ENCODE measurements at regions of chr12 and their contacts with region 1.

Region 1: DNA sequence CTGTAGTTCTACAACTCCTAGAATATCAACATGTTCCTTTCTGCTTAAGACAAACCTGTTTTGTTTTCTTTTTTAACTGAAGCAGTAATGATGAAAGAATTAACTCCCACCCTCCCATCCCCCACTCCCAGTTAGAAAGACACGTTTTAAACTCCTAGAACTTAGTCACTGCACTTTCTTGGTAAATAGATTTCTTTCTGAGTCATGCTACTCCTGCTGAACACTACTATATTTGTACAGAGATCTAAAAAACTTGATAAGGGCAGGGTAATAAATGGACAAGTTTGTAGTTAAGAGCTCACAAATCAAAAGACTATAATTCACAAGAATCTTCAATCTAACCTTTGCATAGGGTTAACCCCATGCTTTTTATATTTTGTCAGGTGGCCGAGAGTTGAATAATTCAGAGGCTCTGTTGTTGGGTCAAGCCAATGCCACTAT is 118.9 kb upstream of the PTPRB start:
- DNase-seq: no peak
- H3K4me3 Mint-ChIP-seq: peak overlapping the region; percentile 49
- H3K27ac Mint-ChIP-seq: peak overlapping the region; percentile 88
- H3K4me1 Mint-ChIP-seq: peaks cover 33% of the 10 kb centered on the region
- H3K27me3 Mint-ChIP-seq: no peaks in the 10 kb centered on the region
- CTCF ChIP-seq: no peak

Region 2: DNA sequence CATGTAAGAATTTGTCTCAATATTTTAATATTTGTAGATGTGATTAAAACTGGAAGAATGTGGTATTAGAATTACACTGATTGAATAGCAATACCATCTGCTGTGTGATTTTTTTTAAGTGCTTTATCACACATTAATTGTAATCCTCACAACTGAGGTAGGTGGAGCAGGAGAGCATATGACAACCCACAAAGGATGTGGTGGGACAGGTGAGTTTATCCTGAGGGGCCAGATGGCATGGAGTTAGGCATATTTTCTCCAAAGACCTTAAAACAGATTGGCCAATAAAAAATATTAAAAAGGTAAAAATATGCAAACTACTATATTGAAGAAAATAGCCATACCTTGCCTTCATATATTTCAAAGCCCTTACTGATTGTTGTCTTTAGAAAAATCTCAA is 1153.2 kb before region 1 on chr12:
- CTCF ChIA-PET with region 1: no interaction called
- intact Hi-C with region 1: no loop called
- DNase-seq: no peak
- H3K4me3 Mint-ChIP-seq: no peak overlapping the region
- H3K27ac Mint-ChIP-seq: peak overlapping the region; percentile 34
- H3K4me1 Mint-ChIP-seq: no peaks in the 10 kb centered on the region
- H3K27me3 Mint-ChIP-seq: no peaks in the 10 kb centered on the region
- CTCF ChIP-seq: no peak

Region 3: DNA sequence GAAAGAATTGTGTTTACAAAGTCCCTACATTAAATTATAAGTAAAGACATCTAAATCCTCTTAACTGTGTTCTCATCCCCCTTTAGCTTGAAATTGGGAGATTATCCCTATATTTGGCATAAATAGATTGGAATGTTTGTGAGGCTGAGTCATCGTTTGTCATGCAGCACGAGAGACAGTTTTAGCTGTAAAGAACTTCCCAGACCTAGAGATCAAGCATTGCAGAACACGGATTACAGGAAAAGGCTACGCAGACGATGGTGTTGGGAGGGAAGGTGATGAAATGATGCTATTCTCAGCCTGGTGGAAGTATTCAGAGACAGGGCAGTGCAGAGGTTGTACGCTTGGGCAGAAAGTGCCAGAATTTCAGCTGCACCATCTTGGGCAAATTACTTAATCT is 212.7 kb before region 1 on chr12:
- CTCF ChIA-PET with region 1: no interaction called
- intact Hi-C with region 1: no loop called
- DNase-seq: no peak
- H3K4me3 Mint-ChIP-seq: no peak overlapping the region
- H3K27ac Mint-ChIP-seq: peak overlapping the region; percentile 50
- H3K4me1 Mint-ChIP-seq: peaks cover 13% of the 10 kb centered on the region
- H3K27me3 Mint-ChIP-seq: no peaks in the 10 kb centered on the region
- CTCF ChIP-seq: no peak

Region 4: DNA sequence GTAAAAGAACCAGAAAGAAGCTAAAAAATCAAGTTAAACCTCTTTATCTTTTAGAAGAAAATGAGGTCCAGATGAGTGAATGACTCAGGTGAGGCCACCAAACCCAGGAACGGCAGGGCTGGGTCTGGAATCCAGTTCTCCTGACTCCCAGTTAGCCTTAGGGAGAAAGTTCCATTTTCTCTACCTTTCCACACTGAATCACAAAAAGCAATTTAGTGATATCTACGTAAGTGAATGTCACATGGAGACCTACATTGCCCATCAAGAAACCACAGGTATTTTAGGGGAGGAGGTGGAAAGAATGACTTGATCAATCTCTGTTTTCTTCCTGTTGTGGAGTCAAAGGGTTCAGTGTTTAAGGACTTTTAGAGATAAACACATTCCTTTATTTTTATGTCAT is 12.0 kb before region 1 on chr12:
- CTCF ChIA-PET with region 1: interaction called, 14 read pairs
- intact Hi-C with region 1: loop called (anchors 1 kb)
- DNase-seq: peak; percentile 58
- H3K4me3 Mint-ChIP-seq: peak overlapping the region; percentile 8
- H3K27ac Mint-ChIP-seq: peak overlapping the region; percentile 83
- H3K4me1 Mint-ChIP-seq: peaks cover 69% of the 10 kb centered on the region
- H3K27me3 Mint-ChIP-seq: no peaks in the 10 kb centered on the region
- CTCF ChIP-seq: no peak

Region 5: DNA sequence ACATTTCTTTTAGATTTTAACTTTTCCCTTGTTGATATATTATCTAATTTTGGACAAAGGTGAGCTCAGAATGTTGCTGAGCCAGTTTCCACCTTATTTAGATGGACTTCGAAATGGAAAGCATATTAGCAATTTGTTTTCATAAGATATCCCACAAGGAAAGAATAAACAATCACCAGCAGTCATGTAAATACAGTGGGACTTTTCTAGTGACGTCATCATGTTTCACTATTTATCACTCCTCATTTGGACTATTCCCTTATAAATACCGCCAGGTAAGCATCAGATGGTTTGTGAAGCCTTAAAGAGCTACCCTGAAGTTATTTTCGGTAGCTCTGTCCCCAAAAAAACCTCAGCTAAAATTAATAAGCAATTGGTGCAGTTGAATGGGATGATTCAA is 53.7 kb after region 1 on chr12:
- CTCF ChIA-PET with region 1: no interaction called
- intact Hi-C with region 1: loop called (anchors 2 kb)
- DNase-seq: no peak
- H3K4me3 Mint-ChIP-seq: no peak overlapping the region
- H3K27ac Mint-ChIP-seq: no peak overlapping the region
- H3K4me1 Mint-ChIP-seq: peaks cover 82% of the 10 kb centered on the region
- H3K27me3 Mint-ChIP-seq: no peaks in the 10 kb centered on the region
- CTCF ChIP-seq: no peak

Region 6: DNA sequence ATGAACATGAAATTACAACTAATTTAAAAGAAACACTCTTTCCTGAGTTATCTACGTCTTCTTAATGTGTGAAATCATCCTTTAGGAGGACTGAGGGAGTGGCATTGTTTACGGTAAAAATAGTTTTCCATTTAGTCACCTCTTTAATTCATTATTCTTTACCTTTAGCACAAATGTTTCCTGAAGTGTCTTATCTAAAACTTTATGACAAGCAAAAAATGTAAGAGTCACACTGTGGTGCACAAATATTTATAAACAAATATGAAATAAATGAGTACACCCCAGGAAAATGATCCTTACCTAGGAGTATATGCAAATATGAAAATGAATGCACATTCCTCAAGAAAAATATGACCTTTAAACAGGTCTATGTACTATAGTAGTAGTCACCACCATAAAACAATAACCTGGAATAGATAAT is 59.8 kb after region 1 on chr12:
- CTCF ChIA-PET with region 1: no interaction called
- intact Hi-C with region 1: loop called (anchors 2 kb)
- DNase-seq: no peak
- H3K4me3 Mint-ChIP-seq: no peak overlapping the region
- H3K27ac Mint-ChIP-seq: peak overlapping the region; percentile 45
- H3K4me1 Mint-ChIP-seq: peaks cover 56% of the 10 kb centered on the region
- H3K27me3 Mint-ChIP-seq: no peaks in the 10 kb centered on the region
- CTCF ChIP-seq: no peak

Region 7: GRCh38 chr12:71157601-71158233 is 401.6 kb after region 1 on chr12 and contains the start of gene TSPAN8:
- CTCF ChIA-PET with region 1: no interaction called
- intact Hi-C with region 1: loop called (anchors 5 kb)
- DNase-seq: peak; percentile 54
- H3K4me3 Mint-ChIP-seq: peak within 1 kb of the TSS; percentile 70
- H3K27ac Mint-ChIP-seq: peak within 1 kb of the TSS; percentile 88
- H3K4me1 Mint-ChIP-seq: peaks cover 61% of the 10 kb centered on the region
- H3K27me3 Mint-ChIP-seq: no peaks in the 10 kb centered on the region
- CTCF ChIP-seq: no peak
- total RNA-seq, gene TSPAN8: 289 and 384 TPM in 2 replicates